Prostate gland (tissue), 2 donors: ENCODE measurements at regions of chr3 and their contacts with region 1.

Region 1: GRCh38 chr3:49171119-49171774 is at the start of gene KLHDC8B:
- DNase-seq: peak; percentile 73
- H3K4me3 ChIP-seq: peak within 1 kb of the TSS; percentile 66 to 85
- H3K27ac ChIP-seq: peak within 1 kb of the TSS; percentile 78 to 81
- H3K4me1 ChIP-seq: peaks cover 13% of the 10 kb centered on the region
- H3K27me3 ChIP-seq: no peaks in the 10 kb centered on the region
- CTCF ChIP-seq: peak; percentile 84 to 95 (median 92)
- POLR2A ChIP-seq: peak; percentile 52
- total RNA-seq, gene KLHDC8B: 41.1 to 77.4 TPM

Region 2: GRCh38 chr3:48535578-48535977 is 635.7 kb before region 1 on chr3:
- intact Hi-C with region 1: no loop called
- DNase-seq: no peak
- H3K4me3 ChIP-seq: no peak overlapping the region
- H3K27ac ChIP-seq: no peak overlapping the region
- H3K4me1 ChIP-seq: no peaks in the 10 kb centered on the region
- H3K27me3 ChIP-seq: no peaks in the 10 kb centered on the region
- CTCF ChIP-seq: no peak
- POLR2A ChIP-seq: no peak

Region 3: DNA sequence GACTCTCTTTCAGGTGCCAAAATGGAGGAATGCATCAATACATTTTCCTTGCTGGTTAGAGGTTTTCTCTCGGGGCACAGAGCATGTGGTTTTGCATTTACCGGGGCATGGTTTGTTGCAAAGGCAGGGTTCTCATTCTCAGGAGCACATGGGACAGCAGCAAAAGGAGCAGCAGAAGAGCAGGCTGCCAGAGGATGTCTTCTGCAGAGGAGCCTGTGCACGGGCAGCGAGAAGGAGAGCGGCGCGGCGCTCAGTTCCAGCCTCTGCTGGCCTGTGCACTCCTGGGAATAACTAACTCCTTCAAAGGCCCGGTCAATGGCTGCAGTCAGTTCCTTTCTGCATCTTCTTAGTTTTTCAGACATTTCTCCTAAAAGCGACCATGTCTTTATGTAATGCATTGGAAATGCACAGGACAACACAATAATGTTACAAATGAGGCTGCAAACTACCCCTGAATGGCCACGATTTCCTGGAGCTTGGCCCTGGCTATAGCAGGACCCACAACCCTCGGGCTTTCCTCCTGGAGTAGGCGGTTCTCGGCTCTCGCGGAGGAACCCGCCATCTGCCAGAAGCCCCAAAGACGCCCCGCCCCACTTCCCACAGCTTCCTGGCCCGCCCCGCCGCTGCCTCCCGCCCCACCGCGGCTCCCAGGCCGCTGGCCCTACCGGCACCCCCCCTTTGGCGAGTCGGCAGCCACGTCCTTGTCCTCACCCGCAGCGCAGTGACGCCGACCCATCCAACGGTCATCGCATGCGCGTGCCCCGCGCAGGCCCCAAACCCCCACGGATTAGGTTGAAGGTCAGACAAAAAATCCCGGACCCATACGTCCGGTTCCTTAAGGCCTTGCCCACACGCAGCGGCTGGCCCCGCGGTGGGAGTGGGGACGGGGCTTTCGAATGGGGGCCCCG is 105.5 kb after region 1 on chr3 and contains the start of gene C3orf62:
- intact Hi-C with region 1: loop called (anchors 5 kb)
- DNase-seq: peak; percentile 87
- H3K4me3 ChIP-seq: peak within 1 kb of the TSS; percentile 35 to 42
- H3K27ac ChIP-seq: peak within 1 kb of the TSS; percentile 96 to 98
- H3K4me1 ChIP-seq: peaks cover 21% of the 10 kb centered on the region
- H3K27me3 ChIP-seq: no peaks in the 10 kb centered on the region
- CTCF ChIP-seq: no peak
- POLR2A ChIP-seq: no peak
- total RNA-seq, gene C3orf62: 4.3 to 9.7 TPM

Region 4: GRCh38 chr3:49339945-49340800 is 168.9 kb after region 1 on chr3 and contains the start of gene USP4:
- intact Hi-C with region 1: loop called (anchors 1 kb)
- DNase-seq: peak; percentile 86
- H3K4me3 ChIP-seq: peak within 1 kb of the TSS; percentile 70 to 73
- H3K27ac ChIP-seq: peak within 1 kb of the TSS; percentile 83 to 94
- H3K4me1 ChIP-seq: peaks cover 2% of the 10 kb centered on the region
- H3K27me3 ChIP-seq: no peaks in the 10 kb centered on the region
- CTCF ChIP-seq: peak; percentile 28 to 80 (median 53)
- POLR2A ChIP-seq: peak; percentile 62
- total RNA-seq, gene USP4: 18.3 to 30.8 TPM

Region 5: DNA sequence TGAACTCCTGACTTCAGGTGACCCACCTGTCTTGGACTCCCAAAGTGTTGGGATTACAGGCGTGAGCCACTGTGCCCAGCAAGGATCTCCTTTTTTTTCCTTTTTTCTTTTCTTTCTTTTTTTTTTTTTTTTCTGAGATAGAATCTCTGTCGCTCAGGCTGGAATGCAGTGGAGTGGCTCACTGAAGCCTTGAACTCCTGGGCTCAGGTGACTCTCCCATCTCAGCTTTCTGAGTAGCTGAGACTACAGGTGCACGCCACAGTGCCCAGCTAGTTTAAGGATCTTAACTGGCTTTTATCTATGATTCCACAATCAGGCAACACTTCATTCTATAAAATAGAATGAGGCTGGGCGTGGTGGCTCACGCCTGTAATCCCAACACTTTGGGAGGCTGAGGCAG is 274.1 kb after region 1 on chr3:
- intact Hi-C with region 1: loop called (anchors 5 kb)
- DNase-seq: no peak
- H3K4me3 ChIP-seq: no peak overlapping the region
- H3K27ac ChIP-seq: no peak overlapping the region
- H3K4me1 ChIP-seq: no peaks in the 10 kb centered on the region
- H3K27me3 ChIP-seq: no peaks in the 10 kb centered on the region
- CTCF ChIP-seq: no peak
- POLR2A ChIP-seq: no peak